ENCODE measurements at regions of chr4 and their contacts with region 1.

Region 1: GRCh38 chr4:47463235-47463956 is at the start of gene COMMD8:
- DNase-seq: peak; percentile 99
- ATAC-seq: peak; percentile 82
- H3K4me3 ChIP-seq: peak within 1 kb of the TSS; percentile 66 to 89 (median 82)
- H3K4me3 Mint-ChIP-seq: peak within 1 kb of the TSS; percentile 91
- H3K27ac ChIP-seq: peak within 1 kb of the TSS; percentile 73 to 96
- H3K27ac Mint-ChIP-seq: peak within 1 kb of the TSS; percentile 92
- H3K4me1 ChIP-seq: peaks cover 22 to 27% of the 10 kb centered on the region in 2 donors
- H3K4me1 Mint-ChIP-seq: peaks cover 53% of the 10 kb centered on the region
- H3K27me3 ChIP-seq: no peaks in the 10 kb centered on the region
- H3K27me3 Mint-ChIP-seq: no peaks in the 10 kb centered on the region
- CTCF ChIP-seq: peak; percentile 52
- total RNA-seq, gene COMMD8: 15.2 TPM in 2 replicates

Region 2: GRCh38 chr4:46839128-46839527 is 624.3 kb before region 1 on chr4:
- CTCF ChIA-PET with region 1: no interaction called
- POLR2A ChIA-PET with region 1: no interaction called
- intact Hi-C with region 1: no loop called
- DNase-seq: no peak
- ATAC-seq: no peak
- H3K4me3 ChIP-seq: no peak overlapping the region
- H3K4me3 Mint-ChIP-seq: no peak overlapping the region
- H3K27ac ChIP-seq: no peak overlapping the region
- H3K27ac Mint-ChIP-seq: no peak overlapping the region
- H3K4me1 ChIP-seq: no peaks in the 10 kb centered on the region
- H3K4me1 Mint-ChIP-seq: no peaks in the 10 kb centered on the region
- H3K27me3 ChIP-seq: no peaks in the 10 kb centered on the region
- H3K27me3 Mint-ChIP-seq: no peaks in the 10 kb centered on the region
- CTCF ChIP-seq: no peak

Region 3: GRCh38 chr4:47490550-47490949 is 27.2 kb after region 1 on chr4:
- CTCF ChIA-PET with region 1: interaction called, 44 read pairs
- POLR2A ChIA-PET with region 1: interaction called, 13 read pairs
- intact Hi-C with region 1: loop called (anchors 1 kb)
- DNase-seq: peak; percentile 57
- ATAC-seq: peak; percentile 87
- H3K4me3 ChIP-seq: no peak overlapping the region
- H3K4me3 Mint-ChIP-seq: peak overlapping the region; percentile 71
- H3K27ac ChIP-seq: peak overlapping the region in 1 of 2 donors; percentile 73
- H3K27ac Mint-ChIP-seq: peak overlapping the region; percentile 82
- H3K4me1 ChIP-seq: peaks cover 26 to 66% of the 10 kb centered on the region in 2 donors
- H3K4me1 Mint-ChIP-seq: peaks cover 66% of the 10 kb centered on the region
- H3K27me3 ChIP-seq: no peaks in the 10 kb centered on the region
- H3K27me3 Mint-ChIP-seq: no peaks in the 10 kb centered on the region
- CTCF ChIP-seq: peak; percentile 72

Region 4: DNA sequence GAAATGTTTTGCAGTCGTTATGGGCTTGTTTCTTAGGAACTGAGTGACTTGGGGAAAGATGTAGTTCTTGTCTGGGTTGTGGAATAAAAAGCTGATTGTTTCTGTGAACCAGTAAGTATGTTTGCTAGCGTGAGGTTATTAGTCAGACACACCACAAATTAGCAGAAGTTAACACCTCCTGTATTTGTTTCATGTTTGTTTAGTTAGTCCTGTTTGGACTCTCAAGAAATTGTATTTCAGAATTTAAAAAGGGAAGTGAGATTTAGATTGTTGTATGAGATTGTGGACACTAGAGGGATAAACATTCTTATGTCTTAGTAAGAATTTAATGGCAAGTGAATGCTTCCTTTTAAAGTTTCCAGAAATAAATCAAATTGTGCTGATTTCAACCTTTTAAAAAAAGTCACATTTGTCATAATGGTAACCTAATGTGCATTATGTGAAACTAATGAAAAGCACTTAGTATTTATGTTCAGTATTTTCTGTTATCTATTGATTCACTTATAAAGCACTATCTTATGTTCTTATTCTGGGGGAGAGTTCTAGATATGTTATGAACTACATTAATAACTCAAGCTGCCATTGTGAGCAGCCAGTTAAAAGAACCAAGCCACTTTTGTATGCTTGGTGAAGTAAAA is 47.2 kb after region 1 on chr4:
- CTCF ChIA-PET with region 1: interaction called, 7 read pairs
- POLR2A ChIA-PET with region 1: interaction called, 4 read pairs
- intact Hi-C with region 1: loop called (anchors 1 kb)
- DNase-seq: peak; percentile 66
- ATAC-seq: peak; percentile 85
- H3K4me3 ChIP-seq: peak overlapping the region in 1 of 5 experiments; percentile 27
- H3K4me3 Mint-ChIP-seq: peak overlapping the region; percentile 64
- H3K27ac ChIP-seq: peak overlapping the region; percentile 52 to 66
- H3K27ac Mint-ChIP-seq: peak overlapping the region; percentile 77
- H3K4me1 ChIP-seq: peaks cover 40 to 63% of the 10 kb centered on the region in 2 donors
- H3K4me1 Mint-ChIP-seq: peaks cover 64% of the 10 kb centered on the region
- H3K27me3 ChIP-seq: no peaks in the 10 kb centered on the region
- H3K27me3 Mint-ChIP-seq: no peaks in the 10 kb centered on the region
- CTCF ChIP-seq: peak; percentile 73

Region 5: GRCh38 chr4:47567511-47567910 is 104.1 kb after region 1 on chr4:
- CTCF ChIA-PET with region 1: interaction called, 40 read pairs
- POLR2A ChIA-PET with region 1: no interaction called
- intact Hi-C with region 1: loop called (anchors 1 kb)
- DNase-seq: no peak
- ATAC-seq: no peak
- H3K4me3 ChIP-seq: no peak overlapping the region
- H3K4me3 Mint-ChIP-seq: no peak overlapping the region
- H3K27ac ChIP-seq: no peak overlapping the region
- H3K27ac Mint-ChIP-seq: no peak overlapping the region
- H3K4me1 ChIP-seq: peaks cover 0 to 5% of the 10 kb centered on the region in 2 donors
- H3K4me1 Mint-ChIP-seq: peaks cover 11% of the 10 kb centered on the region
- H3K27me3 ChIP-seq: no peaks in the 10 kb centered on the region
- H3K27me3 Mint-ChIP-seq: no peaks in the 10 kb centered on the region
- CTCF ChIP-seq: no peak

Region 6: GRCh38 chr4:48340965-48341775 is 877.8 kb after region 1 on chr4 and contains the start of gene SLAIN2:
- CTCF ChIA-PET with region 1: interaction called, 3 read pairs
- POLR2A ChIA-PET with region 1: no interaction called
- intact Hi-C with region 1: loop called (anchors 2 kb)
- DNase-seq: peak; percentile 98
- ATAC-seq: peak; percentile 88
- H3K4me3 ChIP-seq: peak within 1 kb of the TSS; percentile 79 to 96 (median 83)
- H3K4me3 Mint-ChIP-seq: peak within 1 kb of the TSS; percentile 96
- H3K27ac ChIP-seq: peak within 1 kb of the TSS; percentile 93 to 94
- H3K27ac Mint-ChIP-seq: peak within 1 kb of the TSS; percentile 98
- H3K4me1 ChIP-seq: peaks cover 23 to 28% of the 10 kb centered on the region in 2 donors
- H3K4me1 Mint-ChIP-seq: peaks cover 43% of the 10 kb centered on the region
- H3K27me3 ChIP-seq: no peaks in the 10 kb centered on the region
- H3K27me3 Mint-ChIP-seq: no peaks in the 10 kb centered on the region
- CTCF ChIP-seq: peak; percentile 60
- total RNA-seq, gene SLAIN2: 69.1 and 69.2 TPM in 2 replicates

Measured in B cell (primary cell).